CD4-positive, alpha-beta T cell (primary cell): ENCODE measurements at regions of chr6 and their contacts with region 1.

Region 1: GRCh38 chr6:85460921-85461797 is 11.3 kb downstream of the NT5E start:
- DNase-seq: peak in 8 of 14 experiments; percentile 8 to 71 (median 18)
- ATAC-seq: peak; percentile 67
- H3K4me3 ChIP-seq: no peak overlapping the region
- H3K4me3 Mint-ChIP-seq: peak overlapping the region; percentile 3
- H3K27ac ChIP-seq: peak overlapping the region in 1 of 2 donors; percentile 0
- H3K27ac Mint-ChIP-seq: peak overlapping the region; percentile 49
- H3K4me1 ChIP-seq: peaks cover 56% of the 10 kb centered on the region
- H3K4me1 Mint-ChIP-seq: peaks cover 60% of the 10 kb centered on the region
- H3K27me3 ChIP-seq: peaks cover 0 to 4% of the 10 kb centered on the region in 2 experiments
- H3K27me3 Mint-ChIP-seq: no peaks in the 10 kb centered on the region
- CTCF ChIP-seq: no peak

Region 2: GRCh38 chr6:85449818-85450759 is 11.1 kb before region 1 on chr6 and contains the start of gene NT5E:
- CTCF ChIA-PET with region 1: no interaction called
- POLR2A ChIA-PET with region 1: interaction called, 37 read pairs
- intact Hi-C with region 1: loop called in 1 of 2 experiments (anchors 1 kb)
- DNase-seq: peak in 6 of 14 experiments; percentile 7 to 62 (median 30)
- ATAC-seq: peak; percentile 54
- H3K4me3 ChIP-seq: peak within 1 kb of the TSS; percentile 51
- H3K4me3 Mint-ChIP-seq: peak within 1 kb of the TSS; percentile 96
- H3K27ac ChIP-seq: no peak within 1 kb of the TSS
- H3K27ac Mint-ChIP-seq: peak within 1 kb of the TSS; percentile 78
- H3K4me1 ChIP-seq: peaks cover 26% of the 10 kb centered on the region
- H3K4me1 Mint-ChIP-seq: peaks cover 55% of the 10 kb centered on the region
- H3K27me3 ChIP-seq: peaks cover 19 to 37% of the 10 kb centered on the region in 2 experiments
- H3K27me3 Mint-ChIP-seq: peaks cover 73% of the 10 kb centered on the region
- CTCF ChIP-seq: no peak
- total RNA-seq, gene NT5E: 2.7 to 3.3 TPM

Region 3: DNA sequence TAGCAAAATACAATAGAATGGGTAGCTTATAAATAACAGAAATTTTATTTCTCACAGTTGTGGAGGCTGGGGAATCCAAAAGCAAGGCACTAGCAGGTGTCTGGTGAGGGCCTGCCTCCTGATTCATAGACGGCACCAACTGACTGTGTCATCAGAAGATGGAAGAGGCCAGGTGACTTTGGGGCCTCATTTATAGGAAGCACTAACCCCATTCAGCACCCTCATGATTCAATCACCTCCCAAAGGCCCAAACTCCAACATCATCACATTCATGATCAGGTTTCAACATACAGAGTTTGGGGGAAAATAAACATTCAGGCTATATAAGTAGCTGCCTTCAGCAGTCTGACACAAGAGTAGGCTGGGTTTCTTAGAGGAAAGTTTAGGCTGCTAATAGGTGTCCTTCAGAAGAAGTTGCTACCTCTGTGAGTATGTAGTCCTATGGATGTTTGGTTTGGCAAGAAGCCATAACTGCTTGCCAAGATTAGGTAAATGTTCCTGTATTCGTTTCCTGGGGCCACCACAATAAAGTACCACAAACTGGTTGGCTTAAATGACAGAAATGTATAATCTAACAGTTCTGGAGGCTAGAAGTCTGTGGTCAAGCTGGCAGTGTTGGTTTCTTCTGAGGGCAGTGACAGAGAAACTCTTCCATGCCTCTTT is 37.6 kb after region 1 on chr6:
- CTCF ChIA-PET with region 1: no interaction called
- POLR2A ChIA-PET with region 1: no interaction called
- intact Hi-C with region 1: no loop called
- DNase-seq: peak in 2 of 14 experiments; percentile 5 to 14
- ATAC-seq: no peak
- H3K4me3 ChIP-seq: no peak overlapping the region
- H3K4me3 Mint-ChIP-seq: no peak overlapping the region
- H3K27ac ChIP-seq: no peak overlapping the region
- H3K27ac Mint-ChIP-seq: no peak overlapping the region
- H3K4me1 ChIP-seq: peaks cover 7% of the 10 kb centered on the region
- H3K4me1 Mint-ChIP-seq: peaks cover 13% of the 10 kb centered on the region
- H3K27me3 ChIP-seq: no peaks in the 10 kb centered on the region
- H3K27me3 Mint-ChIP-seq: no peaks in the 10 kb centered on the region
- CTCF ChIP-seq: no peak

Region 4: DNA sequence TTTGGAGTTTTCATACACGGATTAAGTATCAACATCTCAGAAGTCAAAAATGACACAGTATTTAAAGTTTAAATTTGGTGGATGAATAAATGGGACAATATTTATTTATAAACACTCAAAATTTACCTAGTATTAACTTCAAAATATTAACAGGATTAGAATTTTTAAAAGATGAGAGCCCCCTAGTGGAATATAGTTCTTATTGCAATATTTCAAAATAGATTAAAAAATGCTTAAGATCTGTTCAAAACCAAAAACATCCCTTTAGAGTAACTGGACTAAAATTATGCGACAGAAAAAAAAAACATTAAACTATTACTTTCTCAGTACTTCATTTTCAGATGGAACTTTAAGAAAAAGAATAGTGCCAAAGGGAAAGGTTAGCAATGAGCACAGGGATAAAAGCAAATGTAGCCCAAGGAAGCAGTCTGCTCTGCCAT is 75.9 kb after region 1 on chr6:
- CTCF ChIA-PET with region 1: no interaction called
- POLR2A ChIA-PET with region 1: no interaction called
- intact Hi-C with region 1: no loop called
- DNase-seq: peak in 2 of 14 experiments; percentile 3 to 26
- ATAC-seq: no peak
- H3K4me3 ChIP-seq: no peak overlapping the region
- H3K4me3 Mint-ChIP-seq: no peak overlapping the region
- H3K27ac ChIP-seq: no peak overlapping the region
- H3K27ac Mint-ChIP-seq: no peak overlapping the region
- H3K4me1 ChIP-seq: no peaks in the 10 kb centered on the region
- H3K4me1 Mint-ChIP-seq: no peaks in the 10 kb centered on the region
- H3K27me3 ChIP-seq: no peaks in the 10 kb centered on the region
- H3K27me3 Mint-ChIP-seq: no peaks in the 10 kb centered on the region
- CTCF ChIP-seq: peak; percentile 88